ENCODE measurements at regions of chr1 and their contacts with region 1.

Region 1: GRCh38 chr1:156751758-156752757 is 583 bp upstream of the HDGF start:
- DNase-seq: peak; percentile 99
- ATAC-seq: peak; percentile 81
- H3K4me3 Mint-ChIP-seq: peak overlapping the region; percentile 98
- H3K27ac Mint-ChIP-seq: peak overlapping the region; percentile 93
- H3K4me1 Mint-ChIP-seq: peaks cover 33% of the 10 kb centered on the region
- H3K27me3 Mint-ChIP-seq: no peaks in the 10 kb centered on the region

Region 2: DNA sequence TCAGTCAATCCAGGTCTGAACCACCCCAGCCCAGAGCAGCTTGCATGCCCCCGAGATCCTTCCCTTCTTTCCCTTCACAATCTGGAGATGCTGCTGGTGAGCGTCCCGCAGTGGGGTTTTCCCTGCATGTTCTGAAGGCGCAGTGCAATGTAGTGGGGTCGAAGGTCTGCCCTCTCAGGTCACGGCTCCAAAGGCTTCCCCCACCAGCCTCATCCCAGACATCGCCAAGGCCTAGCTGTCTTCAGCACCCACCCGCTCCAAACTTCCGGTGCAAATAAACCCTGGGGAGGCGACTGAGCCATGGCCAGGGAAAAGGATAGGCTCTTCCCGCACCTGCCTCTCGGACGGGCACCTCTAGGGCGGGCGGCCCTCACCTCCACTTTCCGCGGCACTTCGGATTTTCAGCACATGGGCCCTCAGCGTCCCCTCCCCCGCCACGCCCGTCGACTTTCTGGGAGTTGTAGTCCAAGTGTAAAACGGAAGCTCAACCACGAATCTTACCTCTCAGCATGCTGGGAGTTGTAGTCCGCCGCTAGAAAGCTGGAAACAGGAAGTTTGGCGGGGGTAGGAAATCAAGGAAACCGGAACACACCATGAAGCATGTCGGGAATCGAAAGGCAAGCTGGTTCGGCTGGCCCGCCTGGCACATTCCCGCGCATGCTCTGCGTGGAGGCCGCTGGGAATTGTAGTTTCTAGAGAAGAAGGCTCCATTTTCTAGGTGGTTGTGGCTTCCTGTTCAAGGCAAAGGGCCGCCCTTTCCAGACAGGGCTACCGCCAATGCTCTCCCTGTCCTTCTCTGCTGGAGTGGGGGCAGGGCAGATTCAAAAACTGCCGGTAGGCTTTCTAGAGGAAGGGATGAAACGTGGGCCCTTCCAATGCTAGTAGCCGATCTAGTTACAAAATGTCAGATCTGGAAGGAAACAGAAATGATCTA is 11.1 kb before region 1 on chr1 and contains the start of gene MRPL24:
- CTCF ChIA-PET with region 1: interaction called, 19 read pairs
- POLR2A ChIA-PET with region 1: interaction called, 24 read pairs
- intact Hi-C with region 1: loop called (anchors 1 kb)
- DNase-seq: peak; percentile 98
- ATAC-seq: peak; percentile 86
- H3K4me3 Mint-ChIP-seq: peak within 1 kb of the TSS; percentile 98
- H3K27ac Mint-ChIP-seq: peak within 1 kb of the TSS; percentile 94
- H3K4me1 Mint-ChIP-seq: peaks cover 49% of the 10 kb centered on the region
- H3K27me3 Mint-ChIP-seq: no peaks in the 10 kb centered on the region
- total RNA-seq, gene MRPL24: 81.9 to 89.7 TPM

Measured in activated CD4-positive, alpha-beta T cell treated with anti-CD3 and anti-CD28 coated beads for 36 hours (primary cell).